Sigmoid colon (tissue), 7 donors: ENCODE measurements at regions of chr6 and their contacts with region 1.

Region 1: DNA sequence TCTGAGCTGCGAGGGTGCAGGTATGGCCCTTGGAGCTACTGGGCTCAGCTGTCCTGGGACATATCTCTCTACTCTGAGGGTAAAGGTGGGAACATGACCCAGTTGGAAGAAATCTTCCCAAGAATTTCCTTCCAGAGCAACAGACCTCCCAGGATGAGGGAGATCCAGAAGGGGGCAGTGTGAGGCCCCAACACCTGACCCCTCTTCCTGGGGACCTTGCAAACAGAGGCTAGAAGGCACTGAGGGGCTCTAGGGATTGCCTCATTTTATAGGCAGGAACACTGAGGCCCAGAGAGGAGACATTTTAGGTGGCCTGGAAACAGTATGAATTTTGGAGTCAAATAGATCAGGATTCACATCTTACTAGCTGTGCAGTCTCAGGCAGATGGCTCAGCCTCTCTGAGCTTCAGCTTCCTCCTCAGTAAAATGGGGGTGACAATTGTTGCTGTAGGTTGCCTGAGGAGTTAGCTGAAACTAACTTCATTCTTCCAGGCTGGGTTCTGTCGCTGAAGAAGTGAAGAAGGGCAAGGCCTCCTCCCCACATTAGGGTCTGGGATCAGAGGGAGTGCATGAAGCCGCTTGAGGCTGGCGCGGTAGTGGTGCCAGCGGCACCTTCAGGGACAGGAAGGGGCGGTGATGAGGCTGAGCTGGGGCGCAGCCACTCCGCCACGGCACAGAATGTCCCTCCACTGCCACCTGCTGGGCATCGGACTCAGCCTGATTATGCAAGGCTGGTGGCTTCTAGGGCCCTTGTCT is 11.4 kb downstream of the KCNK17 start:
- DNase-seq: peak; percentile 80
- H3K4me3 ChIP-seq: peak overlapping the region in 1 of 4 donors; percentile 3
- H3K27ac ChIP-seq: no peak overlapping the region
- H3K4me1 ChIP-seq: peaks cover 0 to 6% (median 3%) of the 10 kb centered on the region in 4 donors
- H3K27me3 ChIP-seq: peaks cover 0 to 33% (median 0%) of the 10 kb centered on the region in 3 donors
- CTCF ChIP-seq: peak; percentile 69 to 86 (median 84)
- EP300 ChIP-seq: no peak
- POLR2A ChIP-seq: no peak

Region 2: GRCh38 chr6:38973178-38974054 is 329.4 kb before region 1 on chr6:
- intact Hi-C with region 1: loop called (anchors 2 kb)
- DNase-seq: no peak
- H3K4me3 ChIP-seq: no peak overlapping the region
- H3K27ac ChIP-seq: no peak overlapping the region
- H3K4me1 ChIP-seq: peaks cover 0 to 25% (median 11%) of the 10 kb centered on the region in 4 donors
- H3K27me3 ChIP-seq: peaks cover 0 to 6% (median 0%) of the 10 kb centered on the region in 3 donors
- CTCF ChIP-seq: peak; percentile 42 to 65 (median 54)
- EP300 ChIP-seq: no peak
- POLR2A ChIP-seq: no peak

Region 3: GRCh38 chr6:39088331-39088730 is 214.5 kb before region 1 on chr6:
- intact Hi-C with region 1: loop called (anchors 5 kb)
- DNase-seq: no peak
- H3K4me3 ChIP-seq: no peak overlapping the region
- H3K27ac ChIP-seq: peak overlapping the region in 1 of 4 donors; percentile 24
- H3K4me1 ChIP-seq: peaks cover 0 to 32% (median 21%) of the 10 kb centered on the region in 4 donors
- H3K27me3 ChIP-seq: no peaks in the 10 kb centered on the region
- CTCF ChIP-seq: peak; percentile 10 to 55 (median 32)
- EP300 ChIP-seq: no peak
- POLR2A ChIP-seq: no peak

Region 4: GRCh38 chr6:39166189-39166911 is 136.5 kb before region 1 on chr6:
- intact Hi-C with region 1: loop called (anchors 1 kb)
- DNase-seq: peak; percentile 77
- H3K4me3 ChIP-seq: no peak overlapping the region
- H3K27ac ChIP-seq: no peak overlapping the region
- H3K4me1 ChIP-seq: peaks cover 0 to 3% (median 0%) of the 10 kb centered on the region in 4 donors
- H3K27me3 ChIP-seq: peaks cover 0 to 11% (median 0%) of the 10 kb centered on the region in 3 donors
- CTCF ChIP-seq: peak; percentile 42 to 67 (median 62)
- EP300 ChIP-seq: no peak
- POLR2A ChIP-seq: no peak